Heart right ventricle (tissue), 16 donors: ENCODE measurements at regions of chr4 and their contacts with region 1.

Region 1: DNA sequence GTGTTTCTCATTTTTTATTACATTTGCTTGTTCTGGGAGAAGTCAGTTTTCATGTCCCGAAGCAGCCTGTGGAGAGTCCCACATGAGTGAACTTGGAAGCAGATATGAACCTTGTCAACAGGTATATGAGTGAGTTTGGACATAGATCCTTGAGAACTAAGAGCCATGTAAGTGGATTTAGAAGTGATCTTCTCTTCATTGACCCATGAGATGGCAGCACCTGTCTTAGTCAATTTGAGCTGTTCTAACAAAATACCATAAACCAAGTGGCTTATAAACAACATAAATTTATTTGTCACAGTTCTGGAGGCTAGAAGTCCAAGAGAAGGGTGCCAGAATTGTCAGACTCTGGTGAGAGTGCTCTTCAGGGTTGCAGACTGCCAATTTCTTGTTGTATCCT is 1043.8 kb downstream of the ADGRL3 start:
- DNase-seq: no peak
- ATAC-seq: no peak
- H3K4me3 ChIP-seq: no peak overlapping the region
- H3K27ac ChIP-seq: no peak overlapping the region
- H3K4me1 ChIP-seq: no peaks in the 10 kb centered on the region
- H3K27me3 ChIP-seq: no peaks in the 10 kb centered on the region
- CTCF ChIP-seq: no peak

Region 2: GRCh38 chr4:62408454-62408853 is 164.6 kb after region 1 on chr4:
- intact Hi-C with region 1: loop called in 1 of 10 experiments (anchors 10 kb)
- DNase-seq: no peak
- ATAC-seq: no peak
- H3K4me3 ChIP-seq: no peak overlapping the region
- H3K27ac ChIP-seq: no peak overlapping the region
- H3K4me1 ChIP-seq: peaks cover 0 to 16% (median 0%) of the 10 kb centered on the region in 9 donors
- H3K27me3 ChIP-seq: no peaks in the 10 kb centered on the region
- CTCF ChIP-seq: peak in 6 of 9 donors; percentile 23 to 51 (median 32)